Right cardiac atrium (tissue), 5 donors: ENCODE measurements at regions of chr17 and their contacts with region 1.

Region 1: GRCh38 chr17:28552246-28552999 is at the start of gene UNC119:
- DNase-seq: peak; percentile 81 to 94 (median 92)
- ATAC-seq: peak; percentile 95 to 96
- H3K4me3 ChIP-seq: peak within 1 kb of the TSS; percentile 66
- H3K27ac ChIP-seq: peak within 1 kb of the TSS; percentile 21
- H3K4me1 ChIP-seq: peaks cover 7% of the 10 kb centered on the region
- H3K27me3 ChIP-seq: no peaks in the 10 kb centered on the region
- total RNA-seq, gene UNC119: 14.0 to 28.8 (median 21.0) TPM

Region 2: DNA sequence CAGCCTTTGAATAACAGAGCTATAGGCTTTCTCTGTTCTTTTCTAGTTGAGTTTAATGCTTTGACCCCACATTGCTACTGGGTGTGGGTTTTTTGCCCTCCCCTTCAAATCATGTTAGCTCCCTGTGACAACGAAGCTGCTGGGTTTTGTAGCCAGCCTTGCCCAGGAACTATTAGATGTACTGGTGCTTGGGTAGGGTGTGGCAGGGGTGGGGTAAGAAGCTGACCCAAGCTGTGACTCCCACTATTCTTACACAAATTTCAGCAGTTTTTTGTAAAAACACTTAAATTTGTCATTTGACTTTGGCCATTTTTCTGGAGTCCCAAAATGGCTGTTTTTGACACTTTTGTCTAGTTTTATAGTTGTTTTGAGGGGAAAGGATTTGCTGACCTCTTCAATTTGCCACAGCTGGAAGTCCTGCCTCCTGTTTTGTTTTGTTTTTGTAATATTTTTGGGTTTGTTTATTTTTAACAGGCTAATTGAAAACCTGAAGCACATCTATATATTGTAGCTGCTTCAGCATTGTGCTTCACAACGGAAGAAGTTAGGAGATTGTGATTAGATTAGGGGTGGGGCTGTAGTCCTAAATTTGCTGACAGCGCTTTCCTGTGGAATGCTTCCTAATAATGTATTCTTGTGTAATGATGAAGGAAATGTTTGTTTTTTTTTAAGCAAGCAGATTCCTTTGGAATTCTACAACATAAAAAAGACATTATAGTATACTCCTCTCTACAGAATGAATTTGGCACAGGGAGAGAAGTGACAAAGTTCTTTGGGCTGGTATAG is 440.0 kb before region 1 on chr17:
- intact Hi-C with region 1: no loop called
- DNase-seq: peak in 1 of 3 donors; percentile 51
- ATAC-seq: peak; percentile 67 to 76
- H3K4me3 ChIP-seq: peak overlapping the region; percentile 20
- H3K27ac ChIP-seq: peak overlapping the region; percentile 90
- H3K4me1 ChIP-seq: peaks cover 7% of the 10 kb centered on the region
- H3K27me3 ChIP-seq: no peaks in the 10 kb centered on the region

Region 3: GRCh38 chr17:28494445-28495188 is 57.8 kb before region 1 on chr17:
- intact Hi-C with region 1: loop called in 1 of 4 experiments (anchors 10 kb)
- DNase-seq: peak; percentile 64 to 89 (median 85)
- ATAC-seq: peak; percentile 54 to 75
- H3K4me3 ChIP-seq: no peak overlapping the region
- H3K27ac ChIP-seq: no peak overlapping the region
- H3K4me1 ChIP-seq: no peaks in the 10 kb centered on the region
- H3K27me3 ChIP-seq: no peaks in the 10 kb centered on the region

Region 4: GRCh38 chr17:28509789-28510188 is 42.6 kb before region 1 on chr17:
- intact Hi-C with region 1: loop called in 1 of 4 experiments (anchors 5 kb)
- DNase-seq: no peak
- ATAC-seq: no peak
- H3K4me3 ChIP-seq: no peak overlapping the region
- H3K27ac ChIP-seq: no peak overlapping the region
- H3K4me1 ChIP-seq: no peaks in the 10 kb centered on the region
- H3K27me3 ChIP-seq: no peaks in the 10 kb centered on the region

Region 5: DNA sequence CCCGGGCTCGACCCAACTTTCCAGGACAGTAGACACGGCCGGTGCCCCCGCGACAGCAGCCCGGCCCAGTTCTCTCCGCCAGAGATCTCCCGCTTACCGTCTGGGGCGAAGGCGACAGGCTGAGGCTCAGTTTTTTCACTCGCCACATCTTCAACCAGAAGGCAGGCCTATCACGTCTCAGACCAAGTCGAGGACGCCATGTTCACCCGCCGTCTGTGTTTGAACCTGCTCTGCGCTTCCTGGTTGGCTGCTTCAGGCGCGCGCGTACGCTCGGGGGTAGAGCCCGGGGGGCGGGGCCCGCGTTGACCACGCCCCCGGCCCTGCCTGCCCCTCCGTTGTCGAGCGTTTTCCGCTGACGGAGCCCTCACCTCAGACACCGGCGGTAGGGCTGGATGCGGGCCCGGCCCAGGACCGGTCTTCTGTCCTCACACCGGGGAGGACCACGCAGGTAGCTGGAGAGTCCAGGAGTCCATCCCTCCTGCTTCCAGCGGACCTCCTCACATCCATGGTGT is 46.4 kb after region 1 on chr17 and contains the start of gene SPAG5:
- intact Hi-C with region 1: loop called in 1 of 4 experiments (anchors 5 kb)
- DNase-seq: peak; percentile 92 to 98 (median 97)
- ATAC-seq: peak; percentile 99
- H3K4me3 ChIP-seq: peak within 1 kb of the TSS; percentile 81
- H3K27ac ChIP-seq: peak within 1 kb of the TSS; percentile 95
- H3K4me1 ChIP-seq: no peaks in the 10 kb centered on the region
- H3K27me3 ChIP-seq: no peaks in the 10 kb centered on the region
- total RNA-seq, gene SPAG5: 0.81 to 2.7 (median 2.1) TPM

Region 6: DNA sequence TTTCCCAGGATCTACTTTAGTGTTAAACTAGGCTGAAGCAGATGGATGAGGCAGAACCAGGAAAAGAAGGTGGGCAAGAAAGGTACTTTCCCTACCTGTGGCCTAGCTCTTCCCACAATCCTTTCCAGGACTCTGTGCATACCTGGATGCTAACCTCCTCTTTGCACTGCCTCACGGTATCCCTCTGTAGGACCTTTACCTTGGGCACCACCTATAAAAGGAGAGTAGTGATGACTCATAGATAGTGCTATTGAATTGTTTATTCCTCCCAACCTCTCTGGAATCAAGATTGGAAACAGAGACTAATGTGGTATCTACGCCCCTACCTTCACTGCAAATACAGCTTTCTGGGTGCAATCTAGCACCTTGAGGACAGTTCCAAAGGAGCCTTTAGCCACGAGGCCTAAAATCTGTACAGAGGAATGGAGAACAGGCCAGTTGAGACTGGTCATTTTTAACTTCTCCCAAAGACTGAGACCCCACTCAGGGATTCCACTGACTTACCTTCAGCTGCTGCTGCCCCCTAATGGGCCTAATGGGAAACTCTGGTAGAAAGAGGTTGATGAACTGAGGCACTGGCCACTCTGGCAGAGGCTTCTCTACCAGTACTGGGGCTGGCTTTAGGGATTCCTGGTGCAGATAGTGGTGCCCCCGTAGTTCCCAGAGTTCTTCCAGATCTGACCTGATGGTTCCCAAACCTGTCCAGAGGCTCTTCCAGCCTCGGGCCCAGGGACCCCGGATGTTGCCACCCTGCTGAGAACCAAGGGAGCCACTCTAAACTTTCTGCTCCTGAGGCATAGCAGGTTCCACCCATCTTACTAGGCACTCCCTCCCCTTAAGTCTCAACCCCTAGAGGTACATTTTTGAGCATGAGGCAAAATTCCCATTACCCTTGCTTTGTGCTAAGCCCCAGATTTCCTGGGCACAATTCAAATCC is 60.8 kb after region 1 on chr17:
- intact Hi-C with region 1: loop called in 3 of 4 experiments (anchors 5 to 10 kb)
- DNase-seq: no peak
- ATAC-seq: peak; percentile 46
- H3K4me3 ChIP-seq: no peak overlapping the region
- H3K27ac ChIP-seq: no peak overlapping the region
- H3K4me1 ChIP-seq: no peaks in the 10 kb centered on the region
- H3K27me3 ChIP-seq: no peaks in the 10 kb centered on the region